Cardiac septum (tissue), 1 donor: ENCODE measurements at regions of chr20 and their contacts with region 1.

Region 1: GRCh38 chr20:57435498-57436222 is 44.5 kb downstream of the RBM38 start:
- DNase-seq: peak; percentile 93

Region 2: GRCh38 chr20:57398231-57398821 is 37.3 kb before region 1 on chr20:
- intact Hi-C with region 1: loop called (anchors 2 kb)
- DNase-seq: no peak